PC-9 (cell line): ENCODE measurements at regions of chr2 and their contacts with region 1.

Region 1: GRCh38 chr2:28392297-28393113 is at the start of gene FOSL2:
- DNase-seq: peak; percentile 96 to 98
- H3K4me3 ChIP-seq: peak within 1 kb of the TSS; percentile 88
- H3K27ac ChIP-seq: peak within 1 kb of the TSS; percentile 96
- H3K4me1 ChIP-seq: peaks cover 36% of the 10 kb centered on the region
- H3K27me3 ChIP-seq: no peaks in the 10 kb centered on the region
- CTCF ChIP-seq: no peak
- total RNA-seq, gene FOSL2: 46.0 and 60.0 TPM in 2 replicates

Region 2: GRCh38 chr2:27322766-27323595 is 1069.5 kb before region 1 on chr2 and contains the start of gene MPV17:
- CTCF ChIA-PET with region 1: no interaction called
- POLR2A ChIA-PET with region 1: no interaction called
- intact Hi-C with region 1: no loop called
- DNase-seq: peak; percentile 89 to 93
- H3K4me3 ChIP-seq: peak within 1 kb of the TSS; percentile 82
- H3K27ac ChIP-seq: peak within 1 kb of the TSS; percentile 69
- H3K4me1 ChIP-seq: peaks cover 28% of the 10 kb centered on the region
- H3K27me3 ChIP-seq: no peaks in the 10 kb centered on the region
- CTCF ChIP-seq: no peak
- total RNA-seq, gene MPV17: 42.2 and 47.5 TPM in 2 replicates

Region 3: DNA sequence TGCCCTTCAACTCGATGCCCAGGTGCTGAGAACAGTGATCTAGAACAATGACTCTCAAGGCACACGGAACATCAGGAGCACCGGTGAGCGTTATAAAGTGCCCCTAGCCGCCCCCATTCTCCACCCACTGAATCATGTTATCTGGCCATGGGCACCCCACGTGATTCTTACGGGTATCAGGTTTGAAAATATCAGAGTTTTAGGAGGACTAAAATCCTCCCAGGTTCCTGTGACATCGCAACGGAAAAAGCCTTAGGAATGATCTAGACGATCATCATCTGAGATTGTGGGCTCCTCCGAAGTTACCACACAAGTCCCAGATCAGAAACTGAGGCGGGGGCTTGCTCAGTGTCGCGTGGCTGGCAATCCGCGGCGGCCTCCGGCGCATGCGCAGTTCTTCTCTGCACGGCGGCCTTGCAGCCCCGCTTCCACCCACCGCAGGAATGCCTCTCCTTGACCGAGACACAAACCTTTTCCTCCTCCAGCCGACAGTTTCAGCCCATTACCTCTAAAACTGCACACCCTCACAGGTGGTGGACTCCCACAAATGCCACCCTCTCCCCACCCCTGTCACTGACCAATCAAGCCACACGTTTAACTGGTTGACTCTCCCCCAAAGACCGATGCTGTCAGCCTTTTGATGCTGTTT is 626.8 kb before region 1 on chr2:
- CTCF ChIA-PET with region 1: no interaction called
- POLR2A ChIA-PET with region 1: no interaction called
- intact Hi-C with region 1: loop called (anchors 1 kb)
- DNase-seq: peak; percentile 93 to 97
- H3K4me3 ChIP-seq: peak overlapping the region; percentile 39
- H3K27ac ChIP-seq: peak overlapping the region; percentile 89
- H3K4me1 ChIP-seq: peaks cover 65% of the 10 kb centered on the region
- H3K27me3 ChIP-seq: no peaks in the 10 kb centered on the region
- CTCF ChIP-seq: no peak

Region 4: GRCh38 chr2:27977608-27978312 is 414.7 kb before region 1 on chr2:
- CTCF ChIA-PET with region 1: no interaction called
- POLR2A ChIA-PET with region 1: no interaction called
- intact Hi-C with region 1: loop called (anchors 5 kb)
- DNase-seq: peak; percentile 55 to 97
- H3K4me3 ChIP-seq: peak overlapping the region; percentile 16; the same call in 1 of the 2 replicates
- H3K27ac ChIP-seq: peak overlapping the region; percentile 83
- H3K4me1 ChIP-seq: peaks cover 31% of the 10 kb centered on the region
- H3K27me3 ChIP-seq: no peaks in the 10 kb centered on the region
- CTCF ChIP-seq: no peak

Region 5: GRCh38 chr2:28276076-28276618 is 116.4 kb before region 1 on chr2:
- CTCF ChIA-PET with region 1: interaction called, 4 read pairs
- POLR2A ChIA-PET with region 1: interaction called, 12 read pairs
- intact Hi-C with region 1: loop called (anchors 2 kb)
- DNase-seq: peak; percentile 38 to 96
- H3K4me3 ChIP-seq: peak overlapping the region; percentile 30; the same call in 1 of the 2 replicates
- H3K27ac ChIP-seq: peak overlapping the region; percentile 90
- H3K4me1 ChIP-seq: peaks cover 91% of the 10 kb centered on the region
- H3K27me3 ChIP-seq: no peaks in the 10 kb centered on the region
- CTCF ChIP-seq: no peak

Region 6: GRCh38 chr2:28413142-28413898 is 20.8 kb after region 1 on chr2:
- CTCF ChIA-PET with region 1: no interaction called
- POLR2A ChIA-PET with region 1: interaction called, 32 read pairs
- intact Hi-C with region 1: loop called (anchors 2 kb)
- DNase-seq: peak in 1 of 2 experiments; percentile 17
- H3K4me3 ChIP-seq: no peak overlapping the region
- H3K27ac ChIP-seq: no peak overlapping the region
- H3K4me1 ChIP-seq: no peaks in the 10 kb centered on the region
- H3K27me3 ChIP-seq: no peaks in the 10 kb centered on the region
- CTCF ChIP-seq: no peak; the same call in 1 of the 2 replicates

Region 7: DNA sequence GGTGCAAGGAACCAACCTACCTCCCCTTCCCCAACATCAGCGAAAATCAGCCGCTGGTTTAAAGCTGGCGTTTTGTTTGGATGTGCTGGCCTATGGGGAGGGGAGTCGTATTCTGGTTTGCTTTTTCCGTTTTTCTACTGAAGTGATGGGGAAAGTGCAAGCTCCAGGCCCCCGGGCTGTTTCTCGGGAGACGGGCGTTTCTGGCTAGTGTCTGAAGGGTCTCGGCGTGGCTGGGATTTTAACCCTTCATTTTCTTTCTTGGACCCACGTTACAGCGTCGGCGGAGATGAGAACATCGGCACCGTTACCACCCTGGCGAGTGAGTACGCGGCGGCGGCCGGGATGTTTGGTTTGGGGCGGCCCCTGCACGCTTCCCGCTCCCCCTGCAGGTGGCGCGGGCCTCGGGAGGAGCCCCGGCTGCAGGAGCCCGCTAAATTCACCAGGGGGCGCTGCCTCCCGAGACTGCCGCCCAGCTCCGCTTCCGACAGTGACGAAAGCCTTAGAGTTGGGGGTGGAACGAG is 174.1 kb after region 1 on chr2:
- CTCF ChIA-PET with region 1: no interaction called
- POLR2A ChIA-PET with region 1: no interaction called
- intact Hi-C with region 1: loop called (anchors 2 kb)
- DNase-seq: peak; percentile 64 to 89
- H3K4me3 ChIP-seq: peak overlapping the region; percentile 79
- H3K27ac ChIP-seq: no peak overlapping the region
- H3K4me1 ChIP-seq: peaks cover 6% of the 10 kb centered on the region
- H3K27me3 ChIP-seq: no peaks in the 10 kb centered on the region
- CTCF ChIP-seq: peak; percentile 100